Psoas muscle (tissue), 8 donors: ENCODE measurements at regions of chr3 and their contacts with region 1.

Region 1: DNA sequence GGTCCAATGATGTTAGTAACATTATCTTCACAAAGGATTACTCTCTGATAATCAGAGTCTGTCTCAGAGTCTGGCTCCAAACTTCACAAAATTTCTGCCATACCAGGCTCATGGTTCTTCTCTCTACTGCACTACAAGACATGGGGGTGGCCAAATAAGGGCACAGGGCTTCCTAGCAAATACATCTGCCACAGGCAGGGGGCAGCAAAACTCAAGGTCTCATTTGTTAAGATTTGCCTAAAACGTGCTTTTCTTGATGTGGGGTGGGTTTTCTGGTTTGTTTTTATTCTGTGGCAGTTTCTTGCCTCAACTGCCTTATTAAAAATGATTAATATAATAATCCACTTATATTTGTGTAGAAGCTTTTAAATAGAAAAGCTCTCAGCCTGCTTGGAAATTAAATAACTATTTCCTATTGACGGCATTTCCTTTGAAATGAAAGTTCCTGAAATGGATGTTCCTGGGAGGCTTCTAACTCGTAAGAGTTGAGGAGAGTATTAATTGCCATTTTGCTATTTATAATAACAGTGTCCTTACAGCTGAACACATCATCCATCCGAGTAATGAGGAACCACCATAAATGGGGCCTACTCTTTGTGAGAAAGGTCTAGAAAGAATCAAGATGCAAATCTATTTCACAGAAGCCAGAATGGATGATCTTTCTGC is 53.8 kb downstream of the SST start:
- DNase-seq: peak in 1 of 2 donors; percentile 51
- ATAC-seq: peak; percentile 44 to 82 (median 59)
- H3K4me3 ChIP-seq: no peak overlapping the region
- H3K27ac ChIP-seq: no peak overlapping the region
- H3K4me1 ChIP-seq: peaks cover 4% of the 10 kb centered on the region
- H3K27me3 ChIP-seq: no peaks in the 10 kb centered on the region
- CTCF ChIP-seq: peak; percentile 75

Region 2: DNA sequence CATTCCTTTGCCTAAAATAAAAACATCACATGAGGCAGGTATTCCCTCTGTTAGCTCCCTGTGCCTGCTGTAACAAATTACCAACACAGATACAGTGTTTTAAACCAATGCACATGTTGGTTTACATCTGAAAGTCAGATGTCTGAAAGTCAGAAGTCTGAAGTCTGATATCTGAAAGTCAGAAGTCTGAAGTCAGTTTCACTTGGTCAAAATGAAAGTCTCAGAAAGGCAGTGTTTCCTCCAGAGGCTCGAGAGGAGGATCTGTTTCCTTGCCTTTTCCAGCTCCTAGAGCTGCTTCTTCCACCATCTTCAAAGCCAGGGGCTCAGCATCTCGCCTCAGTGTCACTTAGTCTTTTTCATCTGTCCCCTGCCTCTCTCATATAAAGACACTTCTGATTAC is 31.7 kb after region 1 on chr3:
- intact Hi-C with region 1: no loop called
- DNase-seq: no peak
- ATAC-seq: no peak
- H3K4me3 ChIP-seq: no peak overlapping the region
- H3K27ac ChIP-seq: no peak overlapping the region
- H3K4me1 ChIP-seq: no peaks in the 10 kb centered on the region
- H3K27me3 ChIP-seq: peaks cover 0 to 13% (median 0%) of the 10 kb centered on the region in 3 donors
- CTCF ChIP-seq: no peak

Region 3: GRCh38 chr3:187714404-187714979 is 98.1 kb after region 1 on chr3:
- intact Hi-C with region 1: loop called (anchors 2 kb)
- DNase-seq: no peak
- ATAC-seq: peak; percentile 79 to 86 (median 80)
- H3K4me3 ChIP-seq: no peak overlapping the region
- H3K27ac ChIP-seq: no peak overlapping the region
- H3K4me1 ChIP-seq: peaks cover 17% of the 10 kb centered on the region
- H3K27me3 ChIP-seq: no peaks in the 10 kb centered on the region
- CTCF ChIP-seq: peak; percentile 98